AG04449 (cell line): ENCODE measurements at regions of chr5 and their contacts with region 1.

Region 1: GRCh38 chr5:32232441-32233219 is 58.5 kb upstream of the GOLPH3 start:
- DNase-seq: no peak
- H3K4me3 ChIP-seq: no peak overlapping the region
- CTCF ChIP-seq: peak; percentile 78

Region 2: GRCh38 chr5:31935702-31936369 is 296.8 kb before region 1 on chr5:
- CTCF ChIA-PET with region 1: no interaction called
- POLR2A ChIA-PET with region 1: no interaction called
- DNase-seq: no peak
- H3K4me3 ChIP-seq: no peak overlapping the region
- CTCF ChIP-seq: no peak

Region 3: GRCh38 chr5:32059768-32060530 is 172.7 kb before region 1 on chr5:
- CTCF ChIA-PET with region 1: no interaction called
- POLR2A ChIA-PET with region 1: no interaction called
- DNase-seq: no peak
- H3K4me3 ChIP-seq: no peak overlapping the region
- CTCF ChIP-seq: no peak

Region 4: DNA sequence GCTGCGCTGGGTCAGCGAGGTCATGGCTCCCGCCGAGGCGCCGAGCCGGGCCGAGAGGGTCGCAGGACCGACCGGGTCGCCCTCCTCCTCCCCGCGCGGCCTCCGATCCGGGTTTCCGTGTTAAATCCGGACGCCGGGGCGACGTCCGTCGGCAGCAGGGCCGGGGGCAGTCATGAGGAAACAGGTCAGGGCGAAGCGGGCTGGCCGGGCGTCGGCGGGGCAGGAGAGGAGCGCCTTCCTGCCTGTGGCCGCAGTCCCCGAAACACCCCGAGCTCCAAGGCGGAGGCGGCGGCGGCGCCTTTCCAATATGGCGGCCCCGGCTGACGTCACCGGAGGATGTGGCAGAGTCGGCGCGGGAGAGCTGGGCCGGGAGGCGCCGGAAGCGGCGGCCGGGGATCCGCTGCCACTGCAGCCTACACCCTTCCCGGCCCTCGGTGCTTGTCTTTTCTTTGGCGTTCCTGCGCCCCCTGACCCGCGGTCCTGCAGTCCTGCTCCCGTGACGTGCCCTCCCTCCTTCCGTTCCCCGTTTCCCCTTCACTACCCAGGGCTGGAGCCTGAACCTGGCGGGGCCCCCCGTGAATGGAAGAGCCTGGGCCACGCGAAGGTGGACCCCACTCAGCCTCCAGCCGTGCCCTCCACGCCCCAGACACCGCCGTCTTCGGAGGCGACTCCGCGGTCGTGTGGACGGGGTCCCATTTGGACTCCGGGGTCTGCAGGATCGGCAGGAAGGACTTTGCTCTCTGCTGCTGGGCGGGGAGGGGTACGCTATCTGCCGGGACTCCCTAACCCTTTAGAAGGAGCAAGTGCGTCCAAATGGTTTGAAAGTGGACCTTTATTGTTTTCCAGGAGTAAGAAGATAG is 58.4 kb before region 1 on chr5 and contains the start of gene GOLPH3:
- CTCF ChIA-PET with region 1: interaction called, 10 read pairs
- POLR2A ChIA-PET with region 1: interaction called, 3 read pairs
- DNase-seq: no peak
- H3K4me3 ChIP-seq: peak within 1 kb of the TSS; percentile 87
- CTCF ChIP-seq: no peak

Region 5: GRCh38 chr5:32254881-32255539 is 22.4 kb after region 1 on chr5:
- CTCF ChIA-PET with region 1: interaction called, 110 read pairs
- POLR2A ChIA-PET with region 1: no interaction called
- DNase-seq: no peak
- H3K4me3 ChIP-seq: no peak overlapping the region
- CTCF ChIP-seq: no peak

Region 6: DNA sequence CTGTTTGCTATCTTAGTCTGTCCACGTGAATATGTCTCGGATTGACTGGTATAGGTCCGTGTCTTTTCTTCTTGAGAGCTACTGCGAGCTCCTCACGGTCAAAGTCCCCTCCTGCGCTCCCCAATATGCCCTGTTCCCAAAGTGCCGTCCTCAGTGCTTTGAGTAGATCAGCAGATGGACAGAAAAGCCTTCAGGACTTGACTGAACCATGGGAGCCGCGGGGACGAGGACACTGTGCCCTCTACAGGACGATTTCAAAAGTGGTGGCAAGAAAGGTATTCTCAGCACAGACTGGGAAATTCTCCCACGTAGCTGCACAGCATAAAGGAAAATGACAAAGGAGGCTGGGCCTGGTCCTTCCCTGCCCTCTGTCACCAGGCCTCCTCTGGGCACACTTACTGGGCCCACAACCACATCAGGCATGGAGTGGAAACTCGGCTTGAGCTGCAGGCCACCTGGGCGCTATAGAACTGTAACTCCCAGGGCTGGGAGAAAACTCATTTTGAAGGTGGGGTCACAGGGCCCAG is 96.7 kb after region 1 on chr5:
- CTCF ChIA-PET with region 1: interaction called, 193 read pairs
- POLR2A ChIA-PET with region 1: no interaction called
- DNase-seq: no peak
- H3K4me3 ChIP-seq: no peak overlapping the region
- CTCF ChIP-seq: peak; percentile 75

Region 7: GRCh38 chr5:32613050-32613672 is 380.5 kb after region 1 on chr5:
- CTCF ChIA-PET with region 1: interaction called, 22 read pairs
- POLR2A ChIA-PET with region 1: no interaction called
- DNase-seq: no peak
- H3K4me3 ChIP-seq: no peak overlapping the region
- CTCF ChIP-seq: peak; percentile 84